Posterior cingulate gyrus (tissue), 11 donors: ENCODE measurements at regions of chr1 and their contacts with region 1.

Region 1: DNA sequence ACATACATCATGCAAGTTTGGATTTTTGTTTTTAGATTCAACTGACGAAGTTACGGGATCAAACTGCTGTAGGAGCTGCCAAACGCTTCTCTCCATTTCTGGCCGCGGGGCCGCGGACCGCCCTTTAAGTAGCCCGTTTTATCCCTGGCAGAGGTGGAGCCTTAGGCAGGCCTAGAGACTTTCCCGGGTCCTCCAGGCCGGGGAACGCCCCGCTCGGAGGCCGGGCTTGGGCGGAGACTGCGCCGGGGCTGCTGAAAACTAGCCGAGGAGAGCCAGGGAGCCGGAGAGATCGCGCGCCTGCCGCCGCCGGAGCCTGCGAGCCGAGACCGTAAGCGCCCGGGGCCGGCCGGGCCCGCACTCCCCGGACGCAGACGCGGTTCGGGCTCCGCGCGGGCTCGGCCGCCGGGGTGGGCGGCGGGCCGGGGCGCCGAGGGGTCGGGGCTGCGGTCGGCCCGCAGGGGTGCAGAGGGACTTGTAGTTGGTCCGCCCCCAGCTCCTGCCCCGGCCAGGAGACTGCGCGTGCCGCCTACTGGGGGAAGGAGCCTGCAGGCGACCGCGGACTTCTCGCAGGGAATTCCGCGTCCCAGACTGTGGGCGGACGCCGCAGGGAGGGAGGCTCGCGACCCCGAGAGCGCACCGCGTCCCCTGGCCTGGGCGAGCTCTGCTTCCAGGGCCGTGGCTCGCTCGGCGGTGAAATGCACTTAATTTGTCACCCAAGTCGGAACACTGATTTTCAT is at the start of gene EPHX1:
- DNase-seq: peak; percentile 74 to 98 (median 87)

Region 2: GRCh38 chr1:225652729-225653462 is 157.1 kb before region 1 on chr1 and contains the start of gene ENAH:
- intact Hi-C with region 1: no loop called
- DNase-seq: peak; percentile 65 to 98 (median 78)

Region 3: GRCh38 chr1:225720937-225721336 is 89.1 kb before region 1 on chr1:
- intact Hi-C with region 1: no loop called
- DNase-seq: no peak

Region 4: DNA sequence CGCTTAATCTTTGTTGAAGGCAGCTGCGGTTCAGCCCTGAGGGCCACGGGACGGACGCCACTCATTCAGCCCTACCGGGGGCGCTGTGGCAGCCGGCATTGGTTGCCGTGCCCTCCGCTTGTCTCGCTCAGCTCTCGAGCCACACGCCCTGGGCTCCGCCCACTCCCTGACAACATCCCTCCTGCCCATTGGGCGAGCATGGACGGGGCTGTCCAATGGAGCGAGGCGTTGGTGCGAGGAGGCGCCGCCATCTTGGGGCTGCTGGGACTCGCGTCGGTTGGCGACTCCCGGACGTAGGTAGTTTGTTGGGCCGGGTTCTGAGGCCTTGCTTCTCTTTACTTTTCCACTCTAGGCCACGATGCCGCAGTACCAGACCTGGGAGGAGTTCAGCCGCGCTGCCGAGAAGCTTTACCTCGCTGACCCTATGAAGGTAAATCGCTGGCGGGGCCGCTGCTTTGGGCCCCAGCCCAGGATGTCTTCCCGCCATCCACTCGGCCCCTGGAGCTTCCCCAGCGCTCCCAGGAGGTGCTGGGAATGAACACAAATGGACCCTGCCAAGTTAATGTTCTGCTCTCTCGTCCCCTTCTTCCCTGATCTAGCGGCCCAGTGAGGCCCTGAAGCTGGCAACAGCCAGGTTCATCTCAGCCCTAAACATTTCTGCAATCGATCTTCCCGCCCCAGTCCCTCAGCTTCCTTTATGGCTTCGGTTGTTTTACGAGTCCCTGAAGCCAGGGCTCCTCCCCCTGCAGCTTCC is 32.2 kb before region 1 on chr1 and contains the start of gene SRP9:
- intact Hi-C with region 1: loop called (anchors 2 kb)
- DNase-seq: peak; percentile 97 to 100 (median 98)

Region 5: GRCh38 chr1:225845571-225846259 is 35.7 kb after region 1 on chr1:
- intact Hi-C with region 1: loop called (anchors 5 kb)
- DNase-seq: peak in 9 of 10 donors; percentile 36 to 93 (median 63)

Region 6: GRCh38 chr1:225881969-225882693 is 72.1 kb after region 1 on chr1 and contains the start of gene TMEM63A:
- intact Hi-C with region 1: loop called (anchors 2 kb)
- DNase-seq: peak; percentile 81 to 97 (median 86)